CD4-positive, alpha-beta T cell (primary cell): ENCODE measurements at regions of chr22 and their contacts with region 1.

Region 1: GRCh38 chr22:24920029-24920428 is 26.5 kb downstream of the LHFPL7 start:
- DNase-seq: no peak
- ATAC-seq: no peak
- H3K4me3 ChIP-seq: no peak overlapping the region
- H3K4me3 Mint-ChIP-seq: no peak overlapping the region
- H3K27ac ChIP-seq: no peak overlapping the region
- H3K27ac Mint-ChIP-seq: no peak overlapping the region
- H3K4me1 ChIP-seq: no peaks in the 10 kb centered on the region
- H3K4me1 Mint-ChIP-seq: no peaks in the 10 kb centered on the region
- H3K27me3 ChIP-seq: no peaks in the 10 kb centered on the region
- H3K27me3 Mint-ChIP-seq: no peaks in the 10 kb centered on the region
- CTCF ChIP-seq: no peak

Region 2: GRCh38 chr22:24564376-24565058 is 355.5 kb before region 1 on chr22:
- CTCF ChIA-PET with region 1: no interaction called
- POLR2A ChIA-PET with region 1: no interaction called
- intact Hi-C with region 1: no loop called
- DNase-seq: no peak
- ATAC-seq: no peak
- H3K4me3 ChIP-seq: no peak overlapping the region
- H3K4me3 Mint-ChIP-seq: no peak overlapping the region
- H3K27ac ChIP-seq: no peak overlapping the region
- H3K27ac Mint-ChIP-seq: peak overlapping the region; percentile 81
- H3K4me1 ChIP-seq: peaks cover 48% of the 10 kb centered on the region
- H3K4me1 Mint-ChIP-seq: peaks cover 52% of the 10 kb centered on the region
- H3K27me3 ChIP-seq: no peaks in the 10 kb centered on the region
- H3K27me3 Mint-ChIP-seq: no peaks in the 10 kb centered on the region
- CTCF ChIP-seq: no peak

Region 3: GRCh38 chr22:24964441-24964840 is 44.4 kb after region 1 on chr22:
- CTCF ChIA-PET with region 1: no interaction called
- POLR2A ChIA-PET with region 1: no interaction called
- intact Hi-C with region 1: loop called in 1 of 2 experiments (anchors 1 kb)
- DNase-seq: no peak
- ATAC-seq: no peak
- H3K4me3 ChIP-seq: no peak overlapping the region
- H3K4me3 Mint-ChIP-seq: no peak overlapping the region
- H3K27ac ChIP-seq: no peak overlapping the region
- H3K27ac Mint-ChIP-seq: no peak overlapping the region
- H3K4me1 ChIP-seq: no peaks in the 10 kb centered on the region
- H3K4me1 Mint-ChIP-seq: no peaks in the 10 kb centered on the region
- H3K27me3 ChIP-seq: no peaks in the 10 kb centered on the region
- H3K27me3 Mint-ChIP-seq: no peaks in the 10 kb centered on the region
- CTCF ChIP-seq: no peak